ENCODE measurements at regions of chr12 and their contacts with region 1.

Region 1: DNA sequence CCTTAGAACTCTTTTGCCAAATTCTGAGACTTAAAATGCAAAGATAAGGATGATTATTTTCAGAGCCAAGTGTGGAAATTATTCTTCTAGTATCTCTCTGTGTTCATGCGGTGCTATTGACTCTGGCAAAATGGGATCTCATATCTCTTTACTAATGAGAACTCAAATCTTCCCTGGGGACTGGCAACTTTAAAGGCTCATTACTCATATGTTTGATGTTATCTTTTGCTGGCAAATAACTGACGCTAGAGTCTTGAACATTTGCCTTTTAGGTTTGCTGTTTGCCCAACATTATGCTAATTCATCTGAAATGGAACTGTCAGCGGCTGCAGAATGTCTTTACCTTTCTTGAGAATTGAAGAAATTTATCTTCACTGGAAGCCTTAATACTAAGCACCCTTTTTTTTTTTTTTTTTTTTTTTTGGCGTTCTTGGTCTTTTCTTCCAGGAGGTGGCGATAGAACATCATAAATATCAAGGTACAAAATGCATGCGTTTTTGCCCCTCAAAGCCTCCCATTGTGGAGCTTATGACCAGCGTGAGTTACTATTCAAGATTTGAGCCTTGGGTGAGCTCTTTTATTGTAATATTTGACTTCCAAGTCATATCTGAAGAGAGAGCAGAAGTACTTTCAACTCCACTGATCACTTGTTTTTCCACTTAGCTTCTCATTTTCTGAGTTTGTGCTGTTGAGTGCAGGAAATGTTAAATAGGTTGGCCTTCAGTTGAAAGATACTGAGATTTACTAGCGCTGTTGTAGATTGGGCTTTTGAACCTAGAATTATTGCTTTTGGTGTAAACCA is 86.6 kb downstream of the CAND1 start:
- DNase-seq: peak; percentile 18
- ATAC-seq: peak; percentile 48; the same call in 1 of the 2 replicates
- H3K4me3 ChIP-seq: no peak overlapping the region
- H3K27ac ChIP-seq: no peak overlapping the region
- H3K4me1 ChIP-seq: no peaks in the 10 kb centered on the region
- H3K27me3 ChIP-seq: no peaks in the 10 kb centered on the region
- CTCF ChIP-seq: peak; percentile 64

Region 2: GRCh38 chr12:67394550-67394949 is 38.8 kb after region 1 on chr12:
- CTCF ChIA-PET with region 1: interaction called, 10 read pairs
- POLR2A ChIA-PET with region 1: no interaction called
- in situ Hi-C with region 1: no loop called
- intact Hi-C with region 1: no loop called
- DNase-seq: no peak
- ATAC-seq: no peak
- H3K4me3 ChIP-seq: no peak overlapping the region
- H3K27ac ChIP-seq: no peak overlapping the region
- H3K4me1 ChIP-seq: no peaks in the 10 kb centered on the region
- H3K27me3 ChIP-seq: no peaks in the 10 kb centered on the region
- CTCF ChIP-seq: no peak

Region 3: GRCh38 chr12:67562513-67563287 is 206.9 kb after region 1 on chr12:
- CTCF ChIA-PET with region 1: interaction called, 16 read pairs
- POLR2A ChIA-PET with region 1: no interaction called
- in situ Hi-C with region 1: no loop called
- intact Hi-C with region 1: no loop called
- DNase-seq: no peak
- ATAC-seq: no peak
- H3K4me3 ChIP-seq: no peak overlapping the region
- H3K27ac ChIP-seq: no peak overlapping the region
- H3K4me1 ChIP-seq: no peaks in the 10 kb centered on the region
- H3K27me3 ChIP-seq: no peaks in the 10 kb centered on the region; the same call in 1 of the 2 replicates
- CTCF ChIP-seq: no peak

Region 4: GRCh38 chr12:67758119-67758518 is 402.3 kb after region 1 on chr12:
- CTCF ChIA-PET with region 1: no interaction called
- POLR2A ChIA-PET with region 1: no interaction called
- in situ Hi-C with region 1: no loop called
- intact Hi-C with region 1: no loop called
- DNase-seq: no peak
- ATAC-seq: no peak
- H3K4me3 ChIP-seq: no peak overlapping the region
- H3K27ac ChIP-seq: no peak overlapping the region
- H3K4me1 ChIP-seq: no peaks in the 10 kb centered on the region
- H3K27me3 ChIP-seq: peaks cover 3% of the 10 kb centered on the region; the same call in 1 of the 2 replicates
- CTCF ChIP-seq: no peak

Region 5: DNA sequence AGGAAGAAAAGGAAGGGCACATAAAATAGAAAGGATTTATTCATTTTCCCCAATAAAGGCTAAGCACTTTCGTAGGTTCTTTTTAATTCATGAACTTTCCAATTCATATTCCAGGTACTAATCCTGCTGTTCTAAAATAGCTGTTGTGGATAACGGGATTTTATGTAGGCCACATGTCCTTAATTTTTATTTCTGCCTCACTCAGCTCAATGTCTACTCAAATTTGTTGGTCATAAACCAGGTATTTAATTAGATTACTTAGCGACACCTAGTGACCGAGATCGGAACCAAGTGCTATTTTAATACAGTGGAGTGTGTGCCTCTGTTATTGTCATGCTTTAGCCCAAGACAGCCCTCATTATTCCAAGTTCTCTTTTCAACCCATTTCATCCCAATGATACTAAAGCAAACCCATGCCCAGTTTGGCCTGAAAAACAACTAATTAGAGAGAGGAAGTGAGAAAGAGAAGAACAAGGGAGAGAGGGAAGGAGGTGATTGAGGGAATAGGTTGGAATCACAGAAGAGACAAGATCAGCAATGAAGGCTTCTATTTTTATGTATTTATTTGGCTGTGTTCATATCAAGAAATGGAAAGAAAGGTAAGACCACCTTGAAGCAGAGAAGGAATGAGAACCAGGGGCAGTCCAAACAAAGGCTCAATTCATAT is 587.6 kb after region 1 on chr12:
- CTCF ChIA-PET with region 1: interaction called, 3 read pairs
- POLR2A ChIA-PET with region 1: no interaction called
- in situ Hi-C with region 1: no loop called
- intact Hi-C with region 1: loop called (anchors 5 kb)
- DNase-seq: peak; percentile 47
- ATAC-seq: peak; percentile 85
- H3K4me3 ChIP-seq: no peak overlapping the region
- H3K27ac ChIP-seq: no peak overlapping the region
- H3K4me1 ChIP-seq: no peaks in the 10 kb centered on the region
- H3K27me3 ChIP-seq: peaks cover 22% of the 10 kb centered on the region
- CTCF ChIP-seq: peak; percentile 75; the same call in 1 of the 2 replicates

Region 6: GRCh38 chr12:68646484-68646883 is 1290.7 kb after region 1 on chr12:
- CTCF ChIA-PET with region 1: no interaction called
- POLR2A ChIA-PET with region 1: interaction called, 14 read pairs
- in situ Hi-C with region 1: no loop called
- intact Hi-C with region 1: no loop called
- DNase-seq: no peak
- ATAC-seq: no peak
- H3K4me3 ChIP-seq: no peak overlapping the region
- H3K27ac ChIP-seq: no peak overlapping the region
- H3K4me1 ChIP-seq: peaks cover 43% of the 10 kb centered on the region
- H3K27me3 ChIP-seq: no peaks in the 10 kb centered on the region
- CTCF ChIP-seq: no peak

Measured in Panc1 (cell line).